ENCODE measurements at regions of chr11 and their contacts with region 1.

Region 1: DNA sequence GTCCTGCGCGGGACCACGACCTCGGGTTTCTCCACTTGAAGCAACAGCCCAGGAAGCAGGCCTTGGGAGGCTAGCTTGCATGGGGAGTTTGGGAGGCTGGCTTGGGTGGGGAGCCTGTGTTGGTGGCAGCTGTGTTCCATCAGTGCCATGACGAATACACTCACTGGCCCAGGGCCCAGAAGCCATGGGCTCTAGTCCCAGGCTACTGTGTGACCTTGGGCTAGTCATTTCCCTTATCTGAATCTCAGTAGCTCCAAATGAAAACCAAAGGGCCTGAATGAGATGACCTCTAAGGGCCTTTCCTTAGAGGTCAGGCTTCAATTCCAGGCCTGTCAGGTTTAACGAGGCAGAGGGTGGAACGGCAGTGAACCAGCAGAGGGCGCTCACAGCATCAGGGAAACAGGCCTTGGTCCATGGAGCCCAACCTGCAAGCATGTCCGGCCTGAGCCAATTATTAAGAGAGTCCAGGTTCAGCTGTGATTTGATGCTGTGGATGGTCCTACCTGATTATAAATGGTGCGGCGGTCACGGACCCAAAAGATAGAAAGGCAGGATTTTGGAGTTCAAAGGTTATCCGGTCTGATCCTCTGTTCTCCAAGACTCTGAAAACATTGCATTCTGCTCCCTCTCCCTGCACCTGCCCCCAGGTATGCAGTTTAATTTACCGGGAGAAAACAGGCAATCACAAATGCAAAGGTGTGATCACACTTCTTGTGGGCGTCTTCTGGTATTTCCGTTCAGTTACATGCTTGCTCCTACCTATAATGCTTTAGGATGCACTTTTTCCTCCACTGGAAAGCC is 15.9 kb downstream of the PTPN5 start:
- DNase-seq: no peak
- H3K4me3 ChIP-seq: no peak overlapping the region
- H3K27me3 ChIP-seq: peaks cover 1% of the 10 kb centered on the region; the same call in 1 of the 2 replicates
- CTCF ChIP-seq: peak; percentile 73

Region 2: GRCh38 chr11:18368221-18368620 is 407.5 kb before region 1 on chr11:
- CTCF ChIA-PET with region 1: no interaction called
- POLR2A ChIA-PET with region 1: no interaction called
- DNase-seq: no peak
- H3K4me3 ChIP-seq: no peak overlapping the region
- H3K27me3 ChIP-seq: no peaks in the 10 kb centered on the region
- CTCF ChIP-seq: no peak

Region 3: GRCh38 chr11:18765554-18765953 is 10.1 kb before region 1 on chr11:
- CTCF ChIA-PET with region 1: interaction called, 18 read pairs
- POLR2A ChIA-PET with region 1: no interaction called
- DNase-seq: no peak
- H3K4me3 ChIP-seq: no peak overlapping the region
- H3K27me3 ChIP-seq: no peaks in the 10 kb centered on the region
- CTCF ChIP-seq: no peak

Region 4: GRCh38 chr11:18794956-18795355 is 19.3 kb after region 1 on chr11:
- CTCF ChIA-PET with region 1: interaction called, 72 read pairs
- POLR2A ChIA-PET with region 1: no interaction called
- DNase-seq: no peak
- H3K4me3 ChIP-seq: no peak overlapping the region
- H3K27me3 ChIP-seq: peaks cover 26% of the 10 kb centered on the region
- CTCF ChIP-seq: no peak

Region 5: DNA sequence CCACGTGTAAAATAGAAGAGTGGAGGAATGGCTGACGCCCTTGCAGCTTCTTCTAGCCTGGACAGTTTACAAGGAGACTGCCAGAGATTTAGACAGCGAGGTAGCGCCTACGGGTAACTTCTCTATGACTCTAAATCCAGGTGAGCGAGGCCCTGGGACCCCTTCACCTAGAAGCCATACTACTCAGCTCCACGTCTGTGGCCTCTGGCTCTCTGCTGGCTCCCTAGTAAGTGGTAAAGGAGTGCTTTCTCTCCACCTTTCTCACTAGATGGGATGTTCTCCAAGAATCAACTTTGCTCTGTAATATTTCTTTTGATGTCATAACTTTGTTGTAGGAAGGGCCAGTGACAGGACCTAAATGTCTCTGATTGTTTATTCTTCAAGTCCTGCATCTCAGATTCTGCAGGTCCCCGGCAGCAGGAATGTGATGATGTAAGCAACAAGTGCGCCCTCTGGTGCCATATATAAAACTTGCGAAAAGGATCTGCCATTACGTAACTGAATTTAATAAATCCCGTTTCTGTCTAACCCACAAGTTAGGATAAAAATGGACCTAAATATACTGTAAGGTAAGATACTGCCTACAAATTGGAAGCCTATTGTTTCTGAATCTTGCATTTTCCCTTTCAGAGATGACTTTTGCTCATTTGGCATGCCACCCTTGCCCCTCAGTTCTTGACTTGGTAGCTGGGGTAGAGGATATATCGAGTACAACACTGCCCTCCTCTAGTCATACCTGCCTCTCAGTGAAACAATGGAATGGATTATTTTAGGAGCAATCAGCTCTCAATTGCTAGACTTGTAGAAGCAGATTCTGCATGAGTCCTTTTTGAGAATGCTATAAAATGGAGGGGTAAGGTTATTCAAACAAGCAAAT is 26.9 kb after region 1 on chr11:
- CTCF ChIA-PET with region 1: interaction called, 72 read pairs
- POLR2A ChIA-PET with region 1: no interaction called
- DNase-seq: peak; percentile 18
- H3K4me3 ChIP-seq: no peak overlapping the region
- H3K27me3 ChIP-seq: no peaks in the 10 kb centered on the region; the same call in 1 of the 2 replicates
- CTCF ChIP-seq: peak; percentile 70

Measured in BJ (cell line).